ENCODE measurements at regions of chr11 and their contacts with region 1.

Region 1: GRCh38 chr11:65888163-65888814 is at the start of gene FIBP:
- DNase-seq: peak; percentile 97 to 99
- H3K4me3 ChIP-seq: peak within 1 kb of the TSS; percentile 66 to 92 (median 81)
- H3K27ac ChIP-seq: peak within 1 kb of the TSS; percentile 94 to 99
- H3K4me1 ChIP-seq: peaks cover 21 to 23% of the 10 kb centered on the region in 2 donors
- H3K27me3 ChIP-seq: no peaks in the 10 kb centered on the region
- CTCF ChIP-seq: peak; percentile 93 to 98 (median 95)
- POLR2A ChIP-seq: peak; percentile 53
- total RNA-seq, gene FIBP: 51.2 to 68.5 (median 51.7) TPM

Region 2: DNA sequence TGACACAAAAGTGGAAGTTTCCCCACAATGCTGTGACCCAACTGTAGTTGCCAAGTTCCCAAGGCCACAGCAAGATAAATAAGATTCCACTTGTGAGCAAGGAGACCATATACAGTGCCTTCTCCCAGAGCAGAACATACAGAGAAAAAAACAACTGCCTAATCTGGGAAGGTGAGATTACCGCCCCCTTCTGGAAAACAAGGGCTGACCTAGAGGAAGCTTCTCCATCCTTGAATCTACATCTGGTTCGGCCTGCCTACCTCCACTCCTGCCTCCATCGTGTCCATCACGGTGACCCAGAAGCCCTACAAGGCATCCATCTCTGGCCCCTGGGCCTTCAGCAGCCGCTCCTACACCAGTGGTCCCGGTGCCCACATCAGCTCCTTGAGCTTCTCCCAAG is 161.6 kb before region 1 on chr11:
- intact Hi-C with region 1: no loop called
- DNase-seq: no peak
- H3K4me3 ChIP-seq: no peak overlapping the region
- H3K27ac ChIP-seq: no peak overlapping the region
- H3K4me1 ChIP-seq: no peaks in the 10 kb centered on the region
- H3K27me3 ChIP-seq: no peaks in the 10 kb centered on the region
- CTCF ChIP-seq: no peak
- POLR2A ChIP-seq: no peak

Region 3: DNA sequence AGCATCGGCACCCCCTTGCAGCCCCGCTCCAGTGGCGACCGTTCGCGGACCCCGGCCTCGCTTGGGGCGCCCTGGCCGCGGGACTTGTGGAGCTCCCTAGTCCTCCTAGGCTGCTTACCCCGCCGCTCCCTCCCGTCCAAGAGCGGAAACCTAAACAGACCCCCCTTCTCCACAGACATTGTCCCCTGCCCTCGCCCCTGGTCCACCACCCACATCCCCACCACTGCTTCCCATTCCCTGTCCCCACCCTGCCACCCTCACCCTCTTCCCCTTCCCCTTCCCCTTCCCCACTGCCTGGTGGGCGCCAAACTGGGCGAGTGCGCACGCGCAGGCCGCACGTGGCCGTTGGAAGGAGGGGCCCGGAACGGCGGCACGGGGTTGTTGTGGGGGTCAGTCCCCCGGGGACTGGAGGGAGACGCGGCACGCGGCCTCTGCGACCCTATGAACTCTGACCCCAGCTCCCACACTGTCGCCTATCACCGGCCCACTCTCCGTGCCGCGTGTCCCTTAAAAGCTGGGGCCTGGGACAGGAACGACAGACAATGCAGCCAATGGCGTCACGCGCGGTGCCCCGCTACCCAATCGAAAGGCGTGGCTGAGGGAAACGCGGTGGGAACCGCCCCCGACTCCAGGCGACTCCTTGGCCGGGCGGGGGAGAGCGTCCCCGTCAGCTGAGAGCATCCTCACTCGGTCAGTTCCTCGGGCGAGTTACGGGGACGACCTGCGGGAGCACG is 54.8 kb before region 1 on chr11 and contains the start of gene SNX32:
- intact Hi-C with region 1: no loop called
- DNase-seq: peak; percentile 92 to 95
- H3K4me3 ChIP-seq: peak within 1 kb of the TSS; percentile 52 to 68 (median 64)
- H3K27ac ChIP-seq: peak within 1 kb of the TSS; percentile 16 to 66
- H3K4me1 ChIP-seq: peaks cover 0 to 4% of the 10 kb centered on the region in 2 donors
- H3K27me3 ChIP-seq: no peaks in the 10 kb centered on the region
- CTCF ChIP-seq: no peak
- POLR2A ChIP-seq: no peak
- total RNA-seq, gene SNX32: 0.15 to 2.3 (median 0.48) TPM

Region 4: GRCh38 chr11:65919146-65920033 is 31.1 kb after region 1 on chr11 and contains the start of gene DRAP1:
- intact Hi-C with region 1: loop called (anchors 1 kb)
- DNase-seq: peak; percentile 98 to 99
- H3K4me3 ChIP-seq: peak within 1 kb of the TSS; percentile 78 to 98 (median 95)
- H3K27ac ChIP-seq: peak within 1 kb of the TSS; percentile 94 to 99
- H3K4me1 ChIP-seq: peaks cover 9 to 29% of the 10 kb centered on the region in 2 donors
- H3K27me3 ChIP-seq: no peaks in the 10 kb centered on the region
- CTCF ChIP-seq: no peak
- POLR2A ChIP-seq: no peak
- total RNA-seq, gene DRAP1: 50.1 to 64.5 (median 51.5) TPM

Region 5: DNA sequence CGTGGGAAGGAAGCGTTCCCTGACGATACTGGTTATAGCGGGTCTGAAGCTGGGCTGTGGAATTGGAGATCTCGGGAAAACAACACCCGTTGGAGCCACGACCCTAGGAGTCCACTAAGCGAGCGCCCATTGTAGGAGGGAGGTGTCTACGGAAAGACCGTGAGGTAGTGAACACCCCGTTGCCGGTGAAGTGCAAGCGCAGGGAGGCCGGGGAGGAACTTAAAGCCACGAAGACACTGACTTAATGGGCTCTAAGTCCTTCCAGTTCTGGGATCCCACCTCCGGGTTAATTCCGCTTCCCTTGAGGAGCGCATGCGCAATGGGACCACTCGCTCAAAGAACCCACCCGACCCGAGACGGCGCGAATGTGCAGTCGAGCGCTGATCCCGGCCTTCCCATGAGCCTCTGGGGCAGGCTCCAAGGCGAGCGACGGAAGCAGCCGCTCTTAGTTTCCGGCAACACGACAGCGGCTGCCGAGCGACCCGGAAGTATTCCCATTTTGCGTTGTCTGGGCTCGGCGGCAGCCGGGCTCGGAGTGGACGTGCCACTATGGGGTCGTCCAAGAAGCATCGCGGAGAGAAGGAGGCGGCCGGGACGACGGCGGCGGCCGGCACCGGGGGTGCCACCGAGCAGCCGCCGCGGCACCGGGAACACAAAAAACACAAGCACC is 73.1 kb after region 1 on chr11 and contains the start of gene SART1:
- intact Hi-C with region 1: loop called (anchors 10 kb)
- DNase-seq: peak; percentile 95
- H3K4me3 ChIP-seq: peak within 1 kb of the TSS; percentile 90 to 100 (median 99)
- H3K27ac ChIP-seq: peak within 1 kb of the TSS; percentile 91
- H3K4me1 ChIP-seq: peaks cover 15 to 16% of the 10 kb centered on the region in 2 donors
- H3K27me3 ChIP-seq: no peaks in the 10 kb centered on the region
- CTCF ChIP-seq: no peak
- POLR2A ChIP-seq: peak; percentile 59
- total RNA-seq, gene SART1: 55.2 to 68.5 (median 55.9) TPM

Region 6: GRCh38 chr11:66136752-66137123 is 248.4 kb after region 1 on chr11:
- intact Hi-C with region 1: no loop called
- DNase-seq: no peak
- H3K4me3 ChIP-seq: no peak overlapping the region
- H3K27ac ChIP-seq: no peak overlapping the region
- H3K4me1 ChIP-seq: no peaks in the 10 kb centered on the region
- H3K27me3 ChIP-seq: no peaks in the 10 kb centered on the region
- CTCF ChIP-seq: no peak
- POLR2A ChIP-seq: no peak